HepG2 (cell line): ENCODE measurements at regions of chr6 and their contacts with region 1.

Region 1: DNA sequence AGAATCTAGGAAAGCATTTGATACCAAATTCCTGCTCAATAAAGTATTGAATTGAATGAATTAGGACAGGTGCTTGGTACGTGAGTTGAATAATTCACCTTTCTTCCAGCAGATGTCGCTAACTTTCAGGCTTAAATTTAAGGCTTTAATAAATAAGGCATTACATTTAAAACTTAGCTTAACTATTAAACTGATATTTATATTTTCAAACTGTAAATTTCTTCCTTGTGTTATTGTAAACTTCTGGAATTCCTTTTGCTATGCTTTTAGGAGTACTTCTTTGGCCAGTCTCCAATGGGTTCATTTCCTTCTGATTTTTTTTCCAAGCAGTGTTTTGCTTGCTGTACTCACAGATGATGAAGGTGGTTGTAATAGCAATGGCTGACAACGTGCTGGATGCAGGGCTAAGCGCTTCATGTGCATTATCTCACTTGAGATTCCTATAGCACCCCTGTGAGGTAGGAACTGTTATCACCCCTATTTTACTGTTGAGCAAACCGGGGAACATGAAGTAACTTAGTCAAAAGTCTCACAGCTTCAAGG is 71.3 kb upstream of the SLC2A12 start:
- DNase-seq: peak; percentile 53
- ATAC-seq: peak; percentile 83
- H3K4me3 ChIP-seq: no peak overlapping the region
- H3K27ac ChIP-seq: no peak overlapping the region
- H3K4me1 ChIP-seq: no peaks in the 10 kb centered on the region
- H3K27me3 ChIP-seq: no peaks in the 10 kb centered on the region
- CTCF ChIP-seq: peak; percentile 59
- EP300 ChIP-seq: no peak
- POLR2A ChIP-seq: no peak
- RAD21 ChIP-seq: no peak

Region 2: DNA sequence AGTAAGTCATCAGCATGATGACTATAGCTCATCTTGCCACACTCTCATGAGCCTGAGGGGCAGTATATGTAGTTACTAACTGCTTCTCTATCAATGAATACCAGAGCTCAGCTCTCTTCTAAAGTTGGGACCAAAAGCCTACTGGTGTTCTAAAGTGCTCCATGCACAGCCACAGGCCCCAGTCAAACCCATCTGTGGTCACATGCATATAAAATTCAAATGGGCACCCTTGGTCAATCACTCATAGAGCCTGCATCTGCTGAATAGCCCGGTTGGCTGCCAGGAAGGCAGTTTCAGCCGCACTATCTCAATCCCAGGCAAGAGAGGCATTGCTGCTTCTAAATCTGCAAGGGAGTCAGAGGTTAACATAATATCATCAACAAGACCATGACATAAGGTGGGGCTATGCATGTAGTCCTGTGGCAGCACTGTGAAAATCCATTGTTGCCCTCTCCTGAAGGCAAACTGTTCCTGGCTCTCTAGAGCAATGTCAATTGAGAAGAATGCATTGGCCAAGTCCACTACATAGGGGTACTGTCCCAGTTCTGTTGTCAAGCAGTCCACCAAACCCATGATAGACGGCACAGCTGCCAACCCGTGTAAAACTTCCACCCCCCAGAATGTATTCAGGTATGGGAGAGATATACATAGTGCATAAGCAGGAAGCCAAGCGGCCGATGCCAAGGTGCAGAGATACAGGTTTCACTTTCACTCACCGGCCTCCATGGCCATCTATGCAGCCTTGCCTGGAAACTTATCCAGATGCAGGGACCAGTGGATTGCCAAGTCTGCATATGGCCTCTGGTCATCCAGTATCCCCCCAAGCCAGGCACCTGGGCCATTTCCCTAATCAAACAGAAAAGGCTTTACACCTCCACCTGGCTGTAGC is 750.0 kb after region 1 on chr6:
- CTCF ChIA-PET with region 1: no interaction called
- POLR2A ChIA-PET with region 1: no interaction called
- in situ Hi-C with region 1: no loop called
- intact Hi-C with region 1: loop called (anchors 2 kb)
- DNase-seq: no peak
- ATAC-seq: peak; percentile 37; the same call in 2 of the 3 replicates
- H3K4me3 ChIP-seq: no peak overlapping the region
- H3K27ac ChIP-seq: no peak overlapping the region
- H3K4me1 ChIP-seq: no peaks in the 10 kb centered on the region
- H3K27me3 ChIP-seq: no peaks in the 10 kb centered on the region
- CTCF ChIP-seq: no peak
- EP300 ChIP-seq: no peak
- POLR2A ChIP-seq: no peak
- RAD21 ChIP-seq: no peak